Activated T-helper 2 cell treated with anti-CD3 and anti-CD28 coated beads, Interferon-gamma antibody, Interleukin-2, Interleukin-4, amounts not matched to agents 10 μg/mL and 5 μg/mL and 100 μg/mL, durations not matched to agents 14 hours and 24 hours and 36 hours (primary cell): ENCODE measurements at regions of chr3 and their contacts with region 1.

Region 1: DNA sequence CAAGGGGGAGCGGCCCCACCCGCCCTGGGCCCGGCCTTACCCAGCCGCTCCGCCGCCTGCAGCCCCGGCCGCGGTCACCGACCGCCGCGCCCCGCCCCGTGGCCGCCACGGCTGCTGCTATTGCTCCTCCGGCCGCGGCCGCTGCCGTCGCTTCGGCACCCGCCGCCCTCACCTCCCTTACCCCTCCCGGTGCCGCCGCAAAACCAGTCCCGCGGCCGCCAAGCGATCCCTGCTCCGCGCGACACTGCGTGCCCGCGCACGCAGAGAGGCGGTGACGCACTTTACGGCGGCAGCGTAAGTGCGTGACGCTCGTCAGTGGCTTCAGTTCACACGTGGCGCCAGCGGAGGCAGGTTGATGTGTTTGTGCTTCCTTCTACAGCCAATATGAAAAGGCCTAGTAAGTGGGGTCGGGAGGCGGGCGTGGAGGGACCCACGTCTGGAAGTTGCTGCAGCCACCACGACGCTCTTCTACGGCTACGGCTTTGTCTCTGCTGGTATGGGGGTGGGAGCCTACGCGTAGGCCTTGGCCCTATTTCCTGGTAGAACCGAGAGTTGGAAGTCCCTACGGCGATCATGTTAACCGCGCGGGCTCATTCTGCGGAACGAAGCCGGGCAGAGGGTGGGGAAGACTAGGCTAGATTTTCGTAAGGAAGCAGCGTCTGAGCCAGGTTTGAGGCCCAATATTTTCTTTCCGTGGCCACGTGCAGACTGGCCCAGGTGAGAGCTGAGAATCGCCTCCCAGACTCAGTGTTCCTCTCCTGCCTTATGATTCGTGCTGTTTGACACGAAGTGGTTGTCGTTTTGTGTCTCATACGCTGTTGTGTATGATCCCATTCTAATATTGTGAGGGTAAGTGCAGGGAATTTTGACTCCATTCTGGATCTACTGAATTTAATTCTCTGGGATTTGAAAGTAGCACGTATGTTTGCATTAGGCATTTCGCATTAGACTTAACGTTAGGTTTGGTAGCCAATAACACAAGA is at the starts of genes GNL3 and PBRM1:
- DNase-seq: peak; percentile 94
- H3K4me3 Mint-ChIP-seq: peak within 1 kb of the TSS; percentile 99
- H3K27ac Mint-ChIP-seq: peak within 1 kb of the TSS; percentile 99
- H3K4me1 Mint-ChIP-seq: peaks cover 46% of the 10 kb centered on the region
- H3K27me3 Mint-ChIP-seq: no peaks in the 10 kb centered on the region
- total RNA-seq, gene GNL3: 226 and 235 TPM in 2 replicates
- total RNA-seq, gene PBRM1: 60.4 and 66.3 TPM in 2 replicates

Region 2: DNA sequence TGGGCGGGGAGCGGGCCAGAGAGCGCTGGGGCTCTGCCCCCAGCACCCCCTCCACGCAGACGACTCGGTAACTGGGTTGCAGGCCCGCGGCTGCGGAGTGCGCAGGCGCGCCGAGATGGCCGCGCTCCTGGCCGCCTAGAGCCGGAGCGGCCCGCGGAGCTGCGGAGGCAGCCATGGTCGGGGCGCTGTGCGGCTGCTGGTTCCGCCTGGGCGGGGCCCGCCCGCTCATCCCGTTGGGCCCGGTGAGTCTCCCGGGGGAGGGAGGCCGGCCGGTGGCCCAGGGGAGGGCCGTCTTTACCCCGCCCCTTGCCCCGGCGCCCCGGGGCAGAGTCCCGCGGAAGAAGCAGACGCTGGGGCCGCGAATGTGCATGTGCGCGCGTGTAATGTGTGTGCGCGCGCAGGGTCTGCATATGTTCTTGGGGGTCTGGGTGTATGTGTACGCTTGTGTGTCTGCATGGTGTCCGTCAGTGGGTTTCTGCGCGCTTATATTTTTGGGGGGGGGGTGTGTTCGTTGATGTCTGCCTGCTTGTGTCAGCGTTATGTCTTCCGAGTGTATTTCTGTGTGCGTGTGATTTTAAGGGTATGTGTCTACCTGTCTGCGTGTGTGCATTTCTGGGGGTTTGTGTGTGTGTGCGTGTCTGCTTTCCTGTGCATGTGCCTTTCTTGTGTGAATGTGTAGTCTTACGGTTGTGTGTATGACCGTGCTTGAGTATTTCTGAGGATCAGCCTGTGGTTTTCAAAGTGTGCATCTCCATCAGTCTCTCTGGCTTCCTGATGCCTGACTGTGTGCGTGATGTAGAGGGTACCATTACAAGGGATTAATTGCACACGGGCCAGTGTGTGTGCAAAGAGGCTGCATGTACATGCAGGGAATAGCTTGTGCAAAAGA is 710.8 kb before region 1 on chr3 and contains the start of gene ABHD14A:
- intact Hi-C with region 1: loop called (anchors 10 kb)
- DNase-seq: peak; percentile 70
- H3K4me3 Mint-ChIP-seq: peak within 1 kb of the TSS; percentile 90
- H3K27ac Mint-ChIP-seq: peak within 1 kb of the TSS; percentile 93
- H3K4me1 Mint-ChIP-seq: peaks cover 24% of the 10 kb centered on the region
- H3K27me3 Mint-ChIP-seq: no peaks in the 10 kb centered on the region
- total RNA-seq, gene ABHD14A: 13.5 and 15.9 TPM in 2 replicates

Region 3: DNA sequence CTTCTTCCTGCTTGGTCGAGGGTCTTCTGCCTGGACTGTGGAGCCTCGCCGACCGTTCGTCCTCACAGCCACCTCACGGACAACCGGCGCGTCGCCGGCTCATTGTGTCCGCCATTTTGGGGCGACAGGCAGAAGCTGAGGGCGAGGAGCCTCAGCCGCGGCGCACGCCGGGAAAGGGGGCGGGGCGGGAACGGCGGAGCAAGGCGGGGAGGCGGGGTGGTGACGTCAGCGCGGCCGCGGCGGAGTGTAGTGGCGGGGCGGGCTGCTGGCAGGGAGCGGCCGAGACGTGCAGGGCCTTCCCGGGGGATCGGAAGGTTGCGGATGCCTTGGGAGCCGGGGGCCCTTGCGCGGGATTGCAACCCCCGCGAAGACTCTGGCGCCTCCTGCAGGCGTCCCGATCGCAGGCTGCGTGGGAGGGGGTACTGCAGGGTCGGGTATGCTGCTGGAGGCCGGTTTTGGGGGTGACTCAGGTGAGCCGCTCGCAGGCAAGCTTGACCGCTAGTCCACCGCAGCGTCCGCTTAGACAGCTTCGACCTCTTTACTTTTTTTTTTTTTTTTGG is 407.4 kb before region 1 on chr3 and contains the start of gene WDR82:
- intact Hi-C with region 1: loop called (anchors 10 kb)
- DNase-seq: peak; percentile 95
- H3K4me3 Mint-ChIP-seq: peak within 1 kb of the TSS; percentile 98
- H3K27ac Mint-ChIP-seq: peak within 1 kb of the TSS; percentile 99
- H3K4me1 Mint-ChIP-seq: peaks cover 57% of the 10 kb centered on the region
- H3K27me3 Mint-ChIP-seq: no peaks in the 10 kb centered on the region
- total RNA-seq, gene WDR82: 101 and 103 TPM in 2 replicates

Region 4: DNA sequence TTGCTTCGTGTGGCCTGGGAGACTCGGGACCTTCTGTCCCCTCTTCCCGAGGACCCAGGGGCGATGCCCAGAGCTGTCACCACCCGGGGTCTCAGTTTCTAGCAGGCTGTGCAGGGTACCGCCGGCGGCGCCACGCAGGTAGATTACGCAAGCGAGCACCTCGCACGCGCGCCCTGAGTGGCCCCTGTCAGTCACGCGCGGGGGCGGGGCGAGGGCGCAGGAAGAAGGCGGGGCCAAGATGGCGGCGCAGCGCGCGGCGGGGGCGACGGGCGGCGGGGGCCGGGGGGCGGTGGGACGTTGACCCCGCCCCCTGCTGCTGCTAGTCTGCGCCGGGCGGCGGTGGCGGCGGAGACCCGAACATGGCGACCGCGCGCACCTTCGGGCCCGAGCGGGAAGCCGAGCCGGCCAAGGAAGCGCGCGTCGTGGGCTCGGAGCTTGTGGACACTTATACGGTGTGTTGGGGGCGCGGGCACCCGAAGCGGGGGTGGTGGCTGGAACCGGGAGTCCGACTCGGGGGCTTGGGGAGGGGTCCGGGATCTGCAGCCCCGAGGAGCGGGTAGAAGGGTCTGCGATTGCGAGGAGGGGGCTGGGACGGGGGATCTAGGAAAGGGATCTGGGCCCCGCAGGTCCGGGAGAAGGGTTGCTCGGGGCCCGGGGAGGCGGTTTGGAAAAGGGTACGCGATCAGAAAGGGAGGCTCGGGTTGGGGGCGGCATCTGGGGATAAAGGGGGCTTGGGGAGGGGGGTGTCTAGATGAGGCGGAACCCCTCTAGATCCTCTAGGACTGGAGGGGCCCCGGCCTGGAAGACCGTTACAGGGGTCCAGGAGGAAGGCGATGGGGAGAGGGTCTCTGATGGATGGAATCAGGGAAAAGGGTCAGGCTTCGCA is 230.5 kb before region 1 on chr3 and contains the start of gene NISCH:
- intact Hi-C with region 1: loop called (anchors 10 kb)
- DNase-seq: peak; percentile 93
- H3K4me3 Mint-ChIP-seq: peak within 1 kb of the TSS; percentile 94
- H3K27ac Mint-ChIP-seq: peak within 1 kb of the TSS; percentile 92
- H3K4me1 Mint-ChIP-seq: peaks cover 27% of the 10 kb centered on the region
- H3K27me3 Mint-ChIP-seq: no peaks in the 10 kb centered on the region
- total RNA-seq, gene NISCH: 70.0 and 73.4 TPM in 2 replicates

Region 5: DNA sequence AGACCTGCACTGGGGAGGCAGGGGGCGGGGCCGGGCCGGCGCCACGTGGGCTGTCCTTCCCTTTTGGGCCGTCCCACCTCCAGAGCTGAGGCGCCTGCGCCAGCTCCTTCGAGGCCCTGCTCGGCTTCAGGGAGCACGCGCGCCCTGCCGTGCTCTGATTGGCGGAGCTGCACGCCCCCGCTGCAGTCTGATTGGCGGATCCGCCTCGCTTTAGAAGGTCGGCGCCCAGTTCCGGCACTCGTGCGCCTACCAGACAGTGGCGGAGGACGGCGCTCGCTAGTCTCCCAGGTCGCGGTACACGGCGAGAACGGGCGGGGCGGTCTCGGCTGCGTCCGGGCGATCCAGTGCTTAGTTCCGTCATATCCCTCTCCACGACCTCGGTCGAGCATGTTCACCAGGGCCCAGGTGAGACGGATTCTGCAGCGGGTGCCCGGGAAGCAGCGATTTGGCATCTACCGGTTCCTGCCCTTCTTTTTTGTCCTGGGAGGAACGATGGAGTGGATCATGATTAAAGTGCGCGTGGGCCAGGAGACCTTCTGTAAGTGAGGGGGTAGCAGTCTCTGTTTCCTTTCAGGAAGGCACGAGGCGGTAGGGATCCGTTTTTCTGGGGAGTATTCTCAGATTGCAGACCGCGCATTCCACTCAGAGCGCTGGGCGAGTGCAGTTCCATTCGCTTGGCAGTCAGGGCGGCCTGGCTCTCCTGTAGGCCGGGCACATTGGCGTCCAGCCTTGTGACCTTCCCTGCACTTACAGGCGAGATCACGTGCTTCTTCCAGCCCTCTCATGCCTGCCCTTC is 149.4 kb before region 1 on chr3 and contains the start of gene UQCC5:
- intact Hi-C with region 1: loop called (anchors 5 kb)
- DNase-seq: peak; percentile 98
- H3K4me3 Mint-ChIP-seq: peak within 1 kb of the TSS; percentile 100
- H3K27ac Mint-ChIP-seq: peak within 1 kb of the TSS; percentile 99
- H3K4me1 Mint-ChIP-seq: peaks cover 46% of the 10 kb centered on the region
- H3K27me3 Mint-ChIP-seq: no peaks in the 10 kb centered on the region
- total RNA-seq, gene UQCC5: 12.5 and 16.4 TPM in 2 replicates

Region 6: DNA sequence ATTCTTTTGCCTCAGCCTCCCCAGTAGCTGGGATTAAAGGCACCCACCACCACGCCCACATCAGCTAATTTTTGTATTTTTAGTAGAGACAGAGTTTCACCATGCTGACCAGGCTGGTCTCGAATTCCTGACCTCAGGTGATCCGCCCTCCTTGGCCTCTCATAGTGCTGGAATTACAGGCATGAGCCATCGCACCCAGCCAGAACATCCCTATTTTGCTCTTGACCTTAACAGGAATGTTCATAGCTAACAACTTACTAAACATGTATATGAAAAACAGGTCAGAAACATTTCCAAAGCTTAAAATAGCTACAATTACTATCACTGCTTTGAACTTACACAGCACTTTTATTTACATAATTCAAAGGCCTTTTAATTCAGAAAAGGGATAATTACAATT is 115.9 kb before region 1 on chr3:
- intact Hi-C with region 1: no loop called
- DNase-seq: no peak
- H3K4me3 Mint-ChIP-seq: no peak overlapping the region
- H3K27ac Mint-ChIP-seq: no peak overlapping the region
- H3K4me1 Mint-ChIP-seq: no peaks in the 10 kb centered on the region
- H3K27me3 Mint-ChIP-seq: no peaks in the 10 kb centered on the region

Region 7: GRCh38 chr3:52670621-52671521 is 15.1 kb before region 1 on chr3:
- intact Hi-C with region 1: loop called (anchors 1 kb)
- DNase-seq: peak; percentile 35
- H3K4me3 Mint-ChIP-seq: peak overlapping the region; percentile 55
- H3K27ac Mint-ChIP-seq: peak overlapping the region; percentile 98
- H3K4me1 Mint-ChIP-seq: peaks cover 22% of the 10 kb centered on the region
- H3K27me3 Mint-ChIP-seq: no peaks in the 10 kb centered on the region

Region 8: DNA sequence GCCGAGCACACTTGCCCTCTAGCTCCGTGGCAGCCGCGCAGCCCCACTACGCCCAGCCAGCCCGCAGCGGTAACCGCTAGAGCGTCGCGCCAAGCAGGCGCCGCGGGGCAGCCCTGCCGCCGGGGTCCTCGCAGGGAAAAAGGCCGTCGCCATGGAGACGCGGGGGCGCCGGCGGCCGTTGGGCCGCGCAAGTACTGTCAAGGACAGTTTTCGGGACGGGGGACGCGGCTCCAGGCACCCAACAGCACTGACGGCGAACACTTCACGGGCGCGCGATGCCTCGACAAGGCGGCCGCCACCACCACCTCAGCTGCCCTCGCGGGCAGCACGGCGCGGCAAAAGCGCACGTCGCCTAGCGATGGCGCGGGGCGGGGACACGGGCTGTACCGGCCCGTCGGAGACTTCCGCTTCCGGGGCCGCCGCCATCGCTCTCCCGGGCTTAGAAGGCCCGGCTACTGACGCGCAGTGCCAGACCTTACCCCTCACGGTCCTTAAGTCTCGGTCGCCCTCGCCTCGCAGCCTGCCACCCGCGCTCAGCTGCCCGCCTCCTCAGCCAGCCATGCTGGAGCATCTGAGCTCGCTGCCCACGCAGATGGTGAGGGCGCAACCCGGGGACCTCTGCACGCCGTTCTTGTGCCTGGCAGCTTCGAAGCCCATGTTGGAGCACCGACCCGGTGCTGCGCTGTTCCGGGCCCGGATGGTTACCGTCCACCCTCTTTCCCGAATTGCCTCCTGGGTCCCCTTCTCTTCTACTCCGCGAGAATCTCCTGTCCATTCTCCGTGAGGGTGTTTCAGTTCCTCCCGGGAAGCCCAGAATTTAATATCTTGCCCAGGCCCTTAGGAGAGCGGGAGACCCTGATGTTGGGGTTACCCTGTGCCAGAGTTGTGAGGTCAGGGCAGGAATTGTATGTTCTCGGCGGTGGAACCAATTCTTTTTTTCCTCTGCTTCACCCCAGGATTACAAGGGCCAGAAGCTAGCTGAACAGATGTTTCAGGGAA is 20.0 kb after region 1 on chr3 and contains the starts of genes GLT8D1 and SPCS1:
- intact Hi-C with region 1: loop called (anchors 1 kb)
- DNase-seq: peak; percentile 84
- H3K4me3 Mint-ChIP-seq: peak within 1 kb of the TSS; percentile 96
- H3K27ac Mint-ChIP-seq: peak within 1 kb of the TSS; percentile 89
- H3K4me1 Mint-ChIP-seq: peaks cover 24% of the 10 kb centered on the region
- H3K27me3 Mint-ChIP-seq: no peaks in the 10 kb centered on the region
- total RNA-seq, gene GLT8D1: 37.6 and 38.7 TPM in 2 replicates
- total RNA-seq, gene SPCS1: 124 and 125 TPM in 2 replicates